Caco-2 (cell line): ENCODE measurements at regions of chr1 and their contacts with region 1.

Region 1: GRCh38 chr1:156689035-156689952 is 12.1 kb upstream of the NES start:
- DNase-seq: peak; percentile 90 to 92
- H3K4me3 ChIP-seq: peak overlapping the region; percentile 16
- H3K4me3 Mint-ChIP-seq: peak overlapping the region; percentile 56
- H3K27ac Mint-ChIP-seq: peak overlapping the region; percentile 8
- H3K4me1 ChIP-seq: peaks cover 46% of the 10 kb centered on the region
- H3K4me1 Mint-ChIP-seq: peaks cover 23% of the 10 kb centered on the region
- H3K27me3 ChIP-seq: no peaks in the 10 kb centered on the region
- H3K27me3 Mint-ChIP-seq: no peaks in the 10 kb centered on the region
- CTCF ChIP-seq: peak; percentile 87 to 89

Region 2: DNA sequence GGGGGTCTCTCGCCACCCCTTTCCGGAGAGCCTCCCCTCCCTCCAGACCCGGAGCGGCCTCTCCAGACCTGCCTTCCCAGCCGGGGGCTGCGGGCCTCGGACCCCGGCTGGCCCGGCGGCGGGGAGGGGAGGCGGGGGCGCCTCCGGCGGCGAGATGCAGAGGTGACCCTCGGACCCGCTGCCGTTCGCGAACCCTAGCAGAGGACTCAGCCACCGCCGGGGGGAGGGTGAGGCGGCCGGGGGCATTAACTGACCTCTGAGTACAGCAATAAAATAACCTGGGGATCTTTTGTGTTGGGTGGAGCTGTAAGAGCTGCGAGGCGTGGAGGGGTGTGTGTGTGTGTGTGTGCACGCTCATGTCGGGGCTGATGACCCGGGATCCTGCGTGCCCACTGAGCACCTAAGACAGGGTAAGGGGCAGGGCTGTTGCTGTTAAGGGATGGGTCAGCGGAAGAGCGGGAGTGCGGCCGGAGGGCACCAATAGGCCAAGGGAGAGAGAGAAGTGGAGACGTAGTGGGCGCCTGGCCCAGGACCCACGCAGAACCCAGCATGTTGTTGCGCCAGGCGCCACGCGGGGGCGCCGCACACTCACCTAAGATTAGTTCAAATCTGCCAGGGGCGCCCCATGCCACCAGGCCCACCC is 63.7 kb before region 1 on chr1:
- CTCF ChIA-PET with region 1: interaction called, 18 read pairs
- POLR2A ChIA-PET with region 1: no interaction called
- intact Hi-C with region 1: no loop called
- DNase-seq: peak; percentile 50 to 62
- H3K4me3 ChIP-seq: peak overlapping the region; percentile 28
- H3K4me3 Mint-ChIP-seq: peak overlapping the region; percentile 64
- H3K27ac Mint-ChIP-seq: no peak overlapping the region
- H3K4me1 ChIP-seq: peaks cover 13% of the 10 kb centered on the region
- H3K4me1 Mint-ChIP-seq: peaks cover 17% of the 10 kb centered on the region
- H3K27me3 ChIP-seq: peaks cover 1% of the 10 kb centered on the region; the same call in 1 of the 2 replicates
- H3K27me3 Mint-ChIP-seq: peaks cover 21% of the 10 kb centered on the region
- CTCF ChIP-seq: peak; percentile 74 to 75

Region 3: GRCh38 chr1:156677616-156678596 is 11.4 kb before region 1 on chr1:
- CTCF ChIA-PET with region 1: interaction called, 27 read pairs
- POLR2A ChIA-PET with region 1: interaction called, 24 read pairs
- intact Hi-C with region 1: no loop called
- DNase-seq: peak; percentile 75 to 79
- H3K4me3 ChIP-seq: peak overlapping the region; percentile 69
- H3K4me3 Mint-ChIP-seq: peak overlapping the region; percentile 86
- H3K27ac Mint-ChIP-seq: peak overlapping the region; percentile 75
- H3K4me1 ChIP-seq: peaks cover 21% of the 10 kb centered on the region; the same call in 1 of the 2 replicates
- H3K4me1 Mint-ChIP-seq: no peaks in the 10 kb centered on the region
- H3K27me3 ChIP-seq: 0 out of 2 replicates have a peak, but pooled peaks cover 2% of the 10 kb centered on the region
- H3K27me3 Mint-ChIP-seq: peaks cover 8% of the 10 kb centered on the region
- CTCF ChIP-seq: peak; percentile 78 to 87

Region 4: GRCh38 chr1:156717275-156717805 is 28.0 kb after region 1 on chr1:
- CTCF ChIA-PET with region 1: interaction called, 30 read pairs
- POLR2A ChIA-PET with region 1: no interaction called
- intact Hi-C with region 1: no loop called
- DNase-seq: no peak
- H3K4me3 ChIP-seq: no peak overlapping the region
- H3K4me3 Mint-ChIP-seq: no peak overlapping the region
- H3K27ac Mint-ChIP-seq: no peak overlapping the region
- H3K4me1 ChIP-seq: peaks cover 3% of the 10 kb centered on the region
- H3K4me1 Mint-ChIP-seq: no peaks in the 10 kb centered on the region
- H3K27me3 ChIP-seq: no peaks in the 10 kb centered on the region
- H3K27me3 Mint-ChIP-seq: no peaks in the 10 kb centered on the region
- CTCF ChIP-seq: no peak

Region 5: DNA sequence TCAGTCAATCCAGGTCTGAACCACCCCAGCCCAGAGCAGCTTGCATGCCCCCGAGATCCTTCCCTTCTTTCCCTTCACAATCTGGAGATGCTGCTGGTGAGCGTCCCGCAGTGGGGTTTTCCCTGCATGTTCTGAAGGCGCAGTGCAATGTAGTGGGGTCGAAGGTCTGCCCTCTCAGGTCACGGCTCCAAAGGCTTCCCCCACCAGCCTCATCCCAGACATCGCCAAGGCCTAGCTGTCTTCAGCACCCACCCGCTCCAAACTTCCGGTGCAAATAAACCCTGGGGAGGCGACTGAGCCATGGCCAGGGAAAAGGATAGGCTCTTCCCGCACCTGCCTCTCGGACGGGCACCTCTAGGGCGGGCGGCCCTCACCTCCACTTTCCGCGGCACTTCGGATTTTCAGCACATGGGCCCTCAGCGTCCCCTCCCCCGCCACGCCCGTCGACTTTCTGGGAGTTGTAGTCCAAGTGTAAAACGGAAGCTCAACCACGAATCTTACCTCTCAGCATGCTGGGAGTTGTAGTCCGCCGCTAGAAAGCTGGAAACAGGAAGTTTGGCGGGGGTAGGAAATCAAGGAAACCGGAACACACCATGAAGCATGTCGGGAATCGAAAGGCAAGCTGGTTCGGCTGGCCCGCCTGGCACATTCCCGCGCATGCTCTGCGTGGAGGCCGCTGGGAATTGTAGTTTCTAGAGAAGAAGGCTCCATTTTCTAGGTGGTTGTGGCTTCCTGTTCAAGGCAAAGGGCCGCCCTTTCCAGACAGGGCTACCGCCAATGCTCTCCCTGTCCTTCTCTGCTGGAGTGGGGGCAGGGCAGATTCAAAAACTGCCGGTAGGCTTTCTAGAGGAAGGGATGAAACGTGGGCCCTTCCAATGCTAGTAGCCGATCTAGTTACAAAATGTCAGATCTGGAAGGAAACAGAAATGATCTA is 51.7 kb after region 1 on chr1 and contains the start of gene MRPL24:
- CTCF ChIA-PET with region 1: interaction called, 17 read pairs
- POLR2A ChIA-PET with region 1: interaction called, 3 read pairs
- intact Hi-C with region 1: no loop called
- DNase-seq: peak; percentile 97 to 99
- H3K4me3 ChIP-seq: peak within 1 kb of the TSS; percentile 62
- H3K4me3 Mint-ChIP-seq: peak within 1 kb of the TSS; percentile 100
- H3K27ac Mint-ChIP-seq: peak within 1 kb of the TSS; percentile 98
- H3K4me1 ChIP-seq: peaks cover 16% of the 10 kb centered on the region
- H3K4me1 Mint-ChIP-seq: peaks cover 25% of the 10 kb centered on the region
- H3K27me3 ChIP-seq: no peaks in the 10 kb centered on the region
- H3K27me3 Mint-ChIP-seq: no peaks in the 10 kb centered on the region
- CTCF ChIP-seq: no peak
- total RNA-seq, gene MRPL24: 52.6 and 54.2 TPM in 2 replicates

Region 6: GRCh38 chr1:156767101-156767878 is 78.0 kb after region 1 on chr1 and contains the start of gene PRCC:
- CTCF ChIA-PET with region 1: interaction called, 13 read pairs
- POLR2A ChIA-PET with region 1: interaction called, 3 read pairs
- intact Hi-C with region 1: loop called (anchors 1 kb)
- DNase-seq: peak; percentile 98 to 99
- H3K4me3 ChIP-seq: peak within 1 kb of the TSS; percentile 93
- H3K4me3 Mint-ChIP-seq: no peak within 1 kb of the TSS
- H3K27ac Mint-ChIP-seq: no peak within 1 kb of the TSS
- H3K4me1 ChIP-seq: peaks cover 8% of the 10 kb centered on the region; the same call in 1 of the 2 replicates
- H3K4me1 Mint-ChIP-seq: peaks cover 39% of the 10 kb centered on the region
- H3K27me3 ChIP-seq: no peaks in the 10 kb centered on the region
- H3K27me3 Mint-ChIP-seq: no peaks in the 10 kb centered on the region
- CTCF ChIP-seq: no peak
- total RNA-seq, gene PRCC: 94.4 and 101 TPM in 2 replicates

Region 7: GRCh38 chr1:156892190-156893047 is 203.1 kb after region 1 on chr1:
- CTCF ChIA-PET with region 1: interaction called, 15 read pairs
- POLR2A ChIA-PET with region 1: no interaction called
- intact Hi-C with region 1: loop called (anchors 1 kb)
- DNase-seq: peak; percentile 91 to 95
- H3K4me3 ChIP-seq: no peak overlapping the region; the same call in 1 of the 2 replicates
- H3K4me3 Mint-ChIP-seq: peak overlapping the region; percentile 59
- H3K27ac Mint-ChIP-seq: no peak overlapping the region
- H3K4me1 ChIP-seq: peaks cover 38% of the 10 kb centered on the region
- H3K4me1 Mint-ChIP-seq: peaks cover 23% of the 10 kb centered on the region
- H3K27me3 ChIP-seq: no peaks in the 10 kb centered on the region
- H3K27me3 Mint-ChIP-seq: peaks cover 12% of the 10 kb centered on the region
- CTCF ChIP-seq: peak; percentile 83 to 89

Region 8: GRCh38 chr1:156958247-156958714 is 269.0 kb after region 1 on chr1:
- CTCF ChIA-PET with region 1: no interaction called
- POLR2A ChIA-PET with region 1: no interaction called
- intact Hi-C with region 1: no loop called
- DNase-seq: no peak
- H3K4me3 ChIP-seq: no peak overlapping the region
- H3K4me3 Mint-ChIP-seq: no peak overlapping the region
- H3K27ac Mint-ChIP-seq: peak overlapping the region; percentile 22
- H3K4me1 ChIP-seq: no peaks in the 10 kb centered on the region
- H3K4me1 Mint-ChIP-seq: peaks cover 11% of the 10 kb centered on the region
- H3K27me3 ChIP-seq: no peaks in the 10 kb centered on the region
- H3K27me3 Mint-ChIP-seq: no peaks in the 10 kb centered on the region
- CTCF ChIP-seq: no peak